B cell (primary cell): ENCODE measurements at regions of chr12 and their contacts with region 1.

Region 1: GRCh38 chr12:71746983-71747611 is 7.6 kb upstream of the RAB21 start:
- DNase-seq: peak; percentile 76
- ATAC-seq: peak; percentile 96
- H3K4me3 ChIP-seq: no peak overlapping the region
- H3K4me3 Mint-ChIP-seq: no peak overlapping the region
- H3K27ac ChIP-seq: no peak overlapping the region
- H3K27ac Mint-ChIP-seq: no peak overlapping the region
- H3K4me1 ChIP-seq: no peaks in the 10 kb centered on the region
- H3K4me1 Mint-ChIP-seq: peaks cover 1% of the 10 kb centered on the region
- H3K27me3 ChIP-seq: no peaks in the 10 kb centered on the region
- H3K27me3 Mint-ChIP-seq: peaks cover 17% of the 10 kb centered on the region
- CTCF ChIP-seq: peak; percentile 86

Region 2: DNA sequence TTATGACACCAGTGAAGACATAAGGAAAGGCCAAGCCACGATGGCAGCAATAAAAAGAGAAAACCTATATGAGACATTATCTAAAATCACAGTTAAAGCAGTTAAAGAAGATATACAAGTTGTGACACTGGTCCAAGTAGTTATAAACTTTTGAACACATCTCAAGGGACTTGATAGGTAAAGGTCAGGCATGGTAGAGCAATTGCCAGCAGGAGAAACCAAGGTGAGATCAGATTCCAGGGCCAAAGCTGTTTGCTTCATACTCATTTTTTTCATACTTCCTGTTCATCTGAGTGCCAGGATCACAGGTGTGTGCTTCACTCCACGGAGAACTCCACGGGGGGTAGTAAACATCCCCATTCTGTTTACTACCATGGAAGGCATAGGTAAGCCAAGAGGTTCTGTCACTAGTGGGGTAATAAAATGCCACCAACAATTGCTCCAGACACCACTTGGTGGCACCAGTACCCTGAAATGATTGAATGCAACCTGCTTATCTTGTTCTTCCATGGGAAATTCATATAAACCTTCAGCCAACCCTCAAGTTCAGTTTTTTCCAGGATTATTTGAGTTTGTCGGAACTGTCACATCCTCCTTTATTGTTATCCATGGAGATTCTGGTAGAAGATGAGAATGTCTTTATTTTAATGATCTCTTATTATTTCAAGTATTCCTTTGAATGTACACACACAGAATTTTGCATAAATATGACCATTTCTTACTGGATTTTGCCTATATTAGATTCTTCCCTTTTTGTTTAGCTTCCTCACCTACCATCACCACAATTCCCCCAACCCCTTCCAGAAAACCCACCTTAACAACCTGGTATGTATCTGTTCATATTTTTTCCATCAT is 530.1 kb before region 1 on chr12:
- CTCF ChIA-PET with region 1: no interaction called
- POLR2A ChIA-PET with region 1: no interaction called
- intact Hi-C with region 1: loop called (anchors 10 kb)
- DNase-seq: peak; percentile 5
- ATAC-seq: no peak
- H3K4me3 ChIP-seq: no peak overlapping the region
- H3K4me3 Mint-ChIP-seq: no peak overlapping the region
- H3K27ac ChIP-seq: no peak overlapping the region
- H3K27ac Mint-ChIP-seq: no peak overlapping the region
- H3K4me1 ChIP-seq: no peaks in the 10 kb centered on the region
- H3K4me1 Mint-ChIP-seq: no peaks in the 10 kb centered on the region
- H3K27me3 ChIP-seq: no peaks in the 10 kb centered on the region
- H3K27me3 Mint-ChIP-seq: peaks cover 6% of the 10 kb centered on the region
- CTCF ChIP-seq: no peak

Region 3: GRCh38 chr12:71626098-71626497 is 121.0 kb before region 1 on chr12:
- CTCF ChIA-PET with region 1: interaction called, 23 read pairs
- POLR2A ChIA-PET with region 1: no interaction called
- intact Hi-C with region 1: loop called (anchors 1 kb)
- DNase-seq: peak; percentile 63
- ATAC-seq: peak; percentile 14
- H3K4me3 ChIP-seq: no peak overlapping the region
- H3K4me3 Mint-ChIP-seq: no peak overlapping the region
- H3K27ac ChIP-seq: peak overlapping the region in 1 of 2 donors; percentile 43
- H3K27ac Mint-ChIP-seq: peak overlapping the region; percentile 5
- H3K4me1 ChIP-seq: peaks cover 0 to 7% of the 10 kb centered on the region in 2 donors
- H3K4me1 Mint-ChIP-seq: peaks cover 22% of the 10 kb centered on the region
- H3K27me3 ChIP-seq: no peaks in the 10 kb centered on the region
- H3K27me3 Mint-ChIP-seq: no peaks in the 10 kb centered on the region
- CTCF ChIP-seq: no peak

Region 4: DNA sequence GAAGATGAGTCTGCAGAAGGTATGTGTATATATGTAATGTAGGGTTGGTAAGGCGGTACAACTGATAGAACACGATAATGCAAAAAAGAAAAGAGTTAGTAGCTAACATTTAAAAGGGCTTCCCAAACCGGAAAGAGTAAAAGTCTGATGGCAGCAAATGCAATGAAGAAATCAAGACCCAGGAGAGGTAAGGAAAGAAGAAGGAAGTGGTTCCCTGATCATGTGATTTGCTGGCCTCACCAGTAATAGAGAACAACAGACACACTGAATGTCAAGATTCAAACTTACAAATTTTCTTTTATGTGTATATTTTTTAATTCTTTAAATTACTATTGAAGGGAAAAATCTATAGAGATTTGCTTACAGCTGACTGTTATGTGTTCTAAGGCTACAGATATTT is 101.8 kb before region 1 on chr12:
- CTCF ChIA-PET with region 1: interaction called, 10 read pairs
- POLR2A ChIA-PET with region 1: interaction called, 3 read pairs
- intact Hi-C with region 1: no loop called
- DNase-seq: peak; percentile 22
- ATAC-seq: no peak
- H3K4me3 ChIP-seq: no peak overlapping the region
- H3K4me3 Mint-ChIP-seq: no peak overlapping the region
- H3K27ac ChIP-seq: peak overlapping the region in 1 of 2 donors; percentile 56
- H3K27ac Mint-ChIP-seq: peak overlapping the region; percentile 34
- H3K4me1 ChIP-seq: peaks cover 0 to 3% of the 10 kb centered on the region in 2 donors
- H3K4me1 Mint-ChIP-seq: peaks cover 15% of the 10 kb centered on the region
- H3K27me3 ChIP-seq: no peaks in the 10 kb centered on the region
- H3K27me3 Mint-ChIP-seq: no peaks in the 10 kb centered on the region
- CTCF ChIP-seq: no peak

Region 5: GRCh38 chr12:71685914-71686665 is 61.0 kb before region 1 on chr12 and contains the start of gene TMEM19:
- CTCF ChIA-PET with region 1: interaction called, 68 read pairs
- POLR2A ChIA-PET with region 1: interaction called, 4 read pairs
- intact Hi-C with region 1: no loop called
- DNase-seq: peak; percentile 94
- ATAC-seq: peak; percentile 91
- H3K4me3 ChIP-seq: peak within 1 kb of the TSS; percentile 70 to 99 (median 81)
- H3K4me3 Mint-ChIP-seq: peak within 1 kb of the TSS; percentile 97
- H3K27ac ChIP-seq: peak within 1 kb of the TSS; percentile 83 to 95
- H3K27ac Mint-ChIP-seq: peak within 1 kb of the TSS; percentile 96
- H3K4me1 ChIP-seq: peaks cover 53 to 54% of the 10 kb centered on the region in 2 donors
- H3K4me1 Mint-ChIP-seq: peaks cover 49% of the 10 kb centered on the region
- H3K27me3 ChIP-seq: no peaks in the 10 kb centered on the region
- H3K27me3 Mint-ChIP-seq: no peaks in the 10 kb centered on the region
- CTCF ChIP-seq: no peak
- total RNA-seq, gene TMEM19: 39.4 and 45.5 TPM in 2 replicates

Region 6: GRCh38 chr12:71731751-71732712 is 15.1 kb before region 1 on chr12:
- CTCF ChIA-PET with region 1: interaction called, 26 read pairs
- POLR2A ChIA-PET with region 1: interaction called, 3 read pairs
- intact Hi-C with region 1: no loop called
- DNase-seq: no peak
- ATAC-seq: no peak
- H3K4me3 ChIP-seq: no peak overlapping the region
- H3K4me3 Mint-ChIP-seq: no peak overlapping the region
- H3K27ac ChIP-seq: no peak overlapping the region
- H3K27ac Mint-ChIP-seq: no peak overlapping the region
- H3K4me1 ChIP-seq: peaks cover under 1 to 2% of the 10 kb centered on the region in 2 donors
- H3K4me1 Mint-ChIP-seq: peaks cover 3% of the 10 kb centered on the region
- H3K27me3 ChIP-seq: no peaks in the 10 kb centered on the region
- H3K27me3 Mint-ChIP-seq: no peaks in the 10 kb centered on the region
- CTCF ChIP-seq: no peak

Region 7: GRCh38 chr12:71786829-71787228 is 39.7 kb after region 1 on chr12:
- CTCF ChIA-PET with region 1: no interaction called
- POLR2A ChIA-PET with region 1: no interaction called
- intact Hi-C with region 1: no loop called
- DNase-seq: no peak
- ATAC-seq: no peak
- H3K4me3 ChIP-seq: no peak overlapping the region
- H3K4me3 Mint-ChIP-seq: no peak overlapping the region
- H3K27ac ChIP-seq: no peak overlapping the region
- H3K27ac Mint-ChIP-seq: no peak overlapping the region
- H3K4me1 ChIP-seq: peaks cover 3% of the 10 kb centered on the region in 2 donors
- H3K4me1 Mint-ChIP-seq: peaks cover 10% of the 10 kb centered on the region
- H3K27me3 ChIP-seq: no peaks in the 10 kb centered on the region
- H3K27me3 Mint-ChIP-seq: no peaks in the 10 kb centered on the region
- CTCF ChIP-seq: no peak

Region 8: GRCh38 chr12:71900091-71900490 is 153.0 kb after region 1 on chr12:
- CTCF ChIA-PET with region 1: no interaction called
- POLR2A ChIA-PET with region 1: no interaction called
- intact Hi-C with region 1: no loop called
- DNase-seq: no peak
- ATAC-seq: no peak
- H3K4me3 ChIP-seq: no peak overlapping the region
- H3K4me3 Mint-ChIP-seq: no peak overlapping the region
- H3K27ac ChIP-seq: no peak overlapping the region
- H3K27ac Mint-ChIP-seq: no peak overlapping the region
- H3K4me1 ChIP-seq: no peaks in the 10 kb centered on the region
- H3K4me1 Mint-ChIP-seq: no peaks in the 10 kb centered on the region
- H3K27me3 ChIP-seq: no peaks in the 10 kb centered on the region
- H3K27me3 Mint-ChIP-seq: no peaks in the 10 kb centered on the region
- CTCF ChIP-seq: no peak